Natural killer cell (primary cell): ENCODE measurements at regions of chr3 and their contacts with region 1.

Region 1: DNA sequence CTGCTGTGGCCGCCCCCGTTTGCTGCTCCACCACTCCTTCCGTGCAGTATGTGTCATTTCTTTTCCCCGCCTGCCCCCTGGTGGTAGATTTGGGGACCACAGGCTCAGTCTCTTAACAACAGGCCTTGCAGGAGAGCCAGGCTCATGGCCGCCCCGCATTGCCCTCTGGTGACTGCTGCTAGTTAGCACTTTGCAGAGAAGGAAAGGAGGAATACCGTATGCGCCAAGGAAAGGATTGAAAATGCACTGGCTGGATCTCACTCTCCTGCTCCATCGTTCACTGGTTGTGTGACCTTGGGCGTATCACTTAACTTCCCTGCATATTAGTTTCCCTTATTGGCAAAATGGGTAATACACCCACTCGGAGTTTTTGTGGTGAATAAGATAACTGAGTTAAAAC is 39.3 kb upstream of the PXYLP1 start:
- DNase-seq: peak; percentile 95 to 96
- ATAC-seq: peak; percentile 99 to 100 (median 100)
- H3K4me3 ChIP-seq: no peak overlapping the region
- H3K4me3 Mint-ChIP-seq: no peak overlapping the region
- H3K27ac ChIP-seq: no peak overlapping the region
- H3K27ac Mint-ChIP-seq: no peak overlapping the region
- H3K4me1 ChIP-seq: no peaks in the 10 kb centered on the region
- H3K4me1 Mint-ChIP-seq: peaks cover 8 to 10% of the 10 kb centered on the region in 2 donors
- H3K27me3 ChIP-seq: peaks cover 8% of the 10 kb centered on the region
- H3K27me3 Mint-ChIP-seq: peaks cover 23 to 33% of the 10 kb centered on the region in 2 donors
- CTCF ChIP-seq: peak; percentile 95

Region 2: GRCh38 chr3:140898340-140899180 is 293.8 kb before region 1 on chr3:
- intact Hi-C with region 1: loop called (anchors 1 kb)
- DNase-seq: peak in 1 of 2 donors; percentile 65
- ATAC-seq: peak in 2 of 3 donors; percentile 57 to 70
- H3K4me3 ChIP-seq: no peak overlapping the region
- H3K4me3 Mint-ChIP-seq: no peak overlapping the region
- H3K27ac ChIP-seq: no peak overlapping the region
- H3K27ac Mint-ChIP-seq: no peak overlapping the region
- H3K4me1 ChIP-seq: no peaks in the 10 kb centered on the region
- H3K4me1 Mint-ChIP-seq: no peaks in the 10 kb centered on the region
- H3K27me3 ChIP-seq: no peaks in the 10 kb centered on the region
- H3K27me3 Mint-ChIP-seq: peaks cover 12 to 35% of the 10 kb centered on the region in 2 donors
- CTCF ChIP-seq: peak; percentile 48

Region 3: GRCh38 chr3:140922634-140923033 is 269.7 kb before region 1 on chr3:
- intact Hi-C with region 1: loop called (anchors 10 kb)
- DNase-seq: peak in 1 of 2 donors; percentile 45
- ATAC-seq: peak in 2 of 3 donors; percentile 35 to 54
- H3K4me3 ChIP-seq: no peak overlapping the region
- H3K4me3 Mint-ChIP-seq: no peak overlapping the region
- H3K27ac ChIP-seq: no peak overlapping the region
- H3K27ac Mint-ChIP-seq: no peak overlapping the region
- H3K4me1 ChIP-seq: no peaks in the 10 kb centered on the region
- H3K4me1 Mint-ChIP-seq: no peaks in the 10 kb centered on the region
- H3K27me3 ChIP-seq: peaks cover 2% of the 10 kb centered on the region
- H3K27me3 Mint-ChIP-seq: peaks cover 14 to 62% of the 10 kb centered on the region in 2 donors
- CTCF ChIP-seq: no peak

Region 4: GRCh38 chr3:141000027-141000663 is 192.2 kb before region 1 on chr3:
- intact Hi-C with region 1: loop called (anchors 1 kb)
- DNase-seq: peak in 1 of 2 donors; percentile 73
- ATAC-seq: peak; percentile 64 to 95 (median 65)
- H3K4me3 ChIP-seq: no peak overlapping the region
- H3K4me3 Mint-ChIP-seq: no peak overlapping the region
- H3K27ac ChIP-seq: no peak overlapping the region
- H3K27ac Mint-ChIP-seq: no peak overlapping the region
- H3K4me1 ChIP-seq: no peaks in the 10 kb centered on the region
- H3K4me1 Mint-ChIP-seq: no peaks in the 10 kb centered on the region
- H3K27me3 ChIP-seq: no peaks in the 10 kb centered on the region
- H3K27me3 Mint-ChIP-seq: no peaks in the 10 kb centered on the region
- CTCF ChIP-seq: peak; percentile 53

Region 5: GRCh38 chr3:141011232-141011996 is 180.9 kb before region 1 on chr3:
- intact Hi-C with region 1: loop called (anchors 1 kb)
- DNase-seq: peak; percentile 66 to 82
- ATAC-seq: peak; percentile 92 to 99 (median 99)
- H3K4me3 ChIP-seq: no peak overlapping the region
- H3K4me3 Mint-ChIP-seq: no peak overlapping the region
- H3K27ac ChIP-seq: no peak overlapping the region
- H3K27ac Mint-ChIP-seq: no peak overlapping the region
- H3K4me1 ChIP-seq: peaks cover 10% of the 10 kb centered on the region
- H3K4me1 Mint-ChIP-seq: peaks cover 0 to 5% of the 10 kb centered on the region in 2 donors
- H3K27me3 ChIP-seq: peaks cover 4% of the 10 kb centered on the region
- H3K27me3 Mint-ChIP-seq: peaks cover 5 to 46% of the 10 kb centered on the region in 2 donors
- CTCF ChIP-seq: peak; percentile 74

Region 6: GRCh38 chr3:141426404-141427034 is 234.2 kb after region 1 on chr3:
- intact Hi-C with region 1: no loop called
- DNase-seq: no peak
- ATAC-seq: no peak
- H3K4me3 ChIP-seq: no peak overlapping the region
- H3K4me3 Mint-ChIP-seq: no peak overlapping the region
- H3K27ac ChIP-seq: no peak overlapping the region
- H3K27ac Mint-ChIP-seq: peak overlapping the region in 1 of 2 donors; percentile 57
- H3K4me1 ChIP-seq: peaks cover 6% of the 10 kb centered on the region
- H3K4me1 Mint-ChIP-seq: peaks cover 30 to 53% of the 10 kb centered on the region in 2 donors
- H3K27me3 ChIP-seq: no peaks in the 10 kb centered on the region
- H3K27me3 Mint-ChIP-seq: no peaks in the 10 kb centered on the region
- CTCF ChIP-seq: no peak